ENCODE measurements at regions of chr1 and their contacts with region 1.

Region 1: GRCh38 chr1:29235955-29236684 is at the start of gene PTPRU:
- DNase-seq: no peak
- ATAC-seq: peak; percentile 77
- H3K4me3 ChIP-seq: peak within 1 kb of the TSS; percentile 89 to 97
- H3K27ac ChIP-seq: peak within 1 kb of the TSS; percentile 53; the same call in 1 of the 2 replicates
- H3K4me1 ChIP-seq: peaks cover 17 to 35% of the 10 kb centered on the region in 2 experiments
- H3K27me3 ChIP-seq: no peaks in the 10 kb centered on the region
- CTCF ChIP-seq: peak; percentile 26 to 53 (median 48); a peak in 3 of 6 replicates
- POLR2A ChIP-seq: no peak
- RAD21 ChIP-seq: peak; percentile 77
- total RNA-seq, gene PTPRU: 40.7 TPM

Region 2: GRCh38 chr1:27922272-27922671 is 1313.8 kb before region 1 on chr1:
- CTCF ChIA-PET with region 1: no interaction called
- POLR2A ChIA-PET with region 1: no interaction called
- RAD21 ChIA-PET with region 1: no interaction called
- intact Hi-C with region 1: no loop called
- DNase-seq: no peak
- ATAC-seq: no peak
- H3K4me3 ChIP-seq: no peak overlapping the region
- H3K27ac ChIP-seq: no peak overlapping the region
- H3K4me1 ChIP-seq: no peaks in the 10 kb centered on the region
- H3K27me3 ChIP-seq: no peaks in the 10 kb centered on the region
- CTCF ChIP-seq: no peak
- POLR2A ChIP-seq: no peak
- RAD21 ChIP-seq: no peak

Region 3: DNA sequence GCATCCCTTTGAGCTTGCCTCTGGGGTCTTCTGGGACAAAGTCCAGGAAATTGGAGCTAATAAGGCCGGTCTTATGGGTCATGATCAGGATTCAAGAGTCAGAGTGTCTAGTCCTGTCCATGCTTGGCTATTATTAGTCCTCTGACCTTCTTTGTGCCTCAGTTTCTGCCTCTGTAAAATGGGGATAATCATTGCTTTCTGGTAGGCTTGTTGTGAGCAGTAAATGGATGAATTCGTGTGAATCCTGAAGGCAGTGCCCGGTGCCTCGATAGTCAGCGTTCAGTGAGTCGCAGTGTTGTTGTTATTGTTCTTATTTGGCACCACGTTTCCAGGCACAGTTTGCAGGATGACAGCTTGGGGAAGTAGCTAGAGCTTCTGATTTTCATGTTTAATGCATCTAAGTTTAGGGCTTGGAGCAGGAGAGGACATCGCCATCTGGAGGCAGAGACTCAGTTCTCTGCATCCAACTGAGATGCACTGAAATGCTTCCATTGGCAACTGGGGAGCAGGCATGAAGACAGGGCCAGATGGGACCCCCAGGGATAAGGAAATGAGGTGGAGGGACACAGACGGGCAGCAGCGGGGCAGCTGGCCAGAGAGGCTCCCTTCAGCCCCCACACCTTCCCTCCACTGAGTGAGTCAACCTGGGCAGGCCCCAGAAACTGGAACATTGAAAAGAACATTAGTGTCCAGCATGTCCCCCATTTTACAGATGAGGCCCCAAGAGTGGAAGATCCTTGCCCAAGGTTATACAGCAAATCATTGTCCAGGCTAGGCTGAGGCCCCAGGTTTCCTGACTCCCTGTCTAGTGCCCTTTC is 160.5 kb after region 1 on chr1:
- CTCF ChIA-PET with region 1: interaction called, 3 read pairs
- POLR2A ChIA-PET with region 1: no interaction called
- RAD21 ChIA-PET with region 1: no interaction called
- intact Hi-C with region 1: loop called (anchors 5 kb)
- DNase-seq: no peak
- ATAC-seq: no peak
- H3K4me3 ChIP-seq: no peak overlapping the region
- H3K27ac ChIP-seq: no peak overlapping the region
- H3K4me1 ChIP-seq: peaks cover 0 to 6% of the 10 kb centered on the region in 2 experiments; a peak in 2 of 4 replicates
- H3K27me3 ChIP-seq: no peaks in the 10 kb centered on the region
- CTCF ChIP-seq: peak; percentile 8 to 45 (median 39); a peak in 5 of 6 replicates
- POLR2A ChIP-seq: no peak
- RAD21 ChIP-seq: peak; percentile 33; the same call in 1 of the 2 replicates

Region 4: GRCh38 chr1:29849038-29849750 is 613.1 kb after region 1 on chr1:
- CTCF ChIA-PET with region 1: no interaction called
- POLR2A ChIA-PET with region 1: no interaction called
- RAD21 ChIA-PET with region 1: interaction called in 1 of 2 experiments, 4 read pairs
- intact Hi-C with region 1: loop called (anchors 5 kb)
- DNase-seq: no peak
- ATAC-seq: peak; percentile 96
- H3K4me3 ChIP-seq: no peak overlapping the region
- H3K27ac ChIP-seq: no peak overlapping the region
- H3K4me1 ChIP-seq: peaks cover 0 to 5% of the 10 kb centered on the region in 2 experiments; a peak in 3 of 4 replicates
- H3K27me3 ChIP-seq: peaks cover 8% of the 10 kb centered on the region; the same call in 1 of the 2 replicates
- CTCF ChIP-seq: peak; percentile 65 to 91 (median 72)
- POLR2A ChIP-seq: no peak
- RAD21 ChIP-seq: peak; percentile 82

Region 5: DNA sequence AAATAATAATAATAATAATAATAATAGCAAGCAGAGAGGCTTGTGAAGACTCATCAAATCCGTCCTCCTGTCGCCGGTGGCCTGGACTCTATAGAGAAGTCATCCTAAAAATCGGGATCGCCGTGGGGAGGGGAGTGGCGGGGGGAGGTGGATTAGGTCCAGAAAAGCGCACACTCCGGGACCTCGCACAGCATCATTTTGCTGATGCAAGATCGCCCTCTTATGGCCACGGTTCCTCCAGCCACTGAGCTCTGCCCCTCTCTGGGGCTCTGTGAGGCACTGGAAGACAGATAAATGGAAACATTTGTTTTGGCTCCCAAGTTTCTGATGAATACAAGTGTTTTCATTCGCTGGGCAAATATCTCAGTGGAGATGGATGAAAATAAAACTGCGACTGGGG is 875.3 kb after region 1 on chr1:
- CTCF ChIA-PET with region 1: no interaction called
- POLR2A ChIA-PET with region 1: no interaction called
- RAD21 ChIA-PET with region 1: no interaction called
- intact Hi-C with region 1: loop called (anchors 2 kb)
- DNase-seq: peak; percentile 10
- ATAC-seq: peak; percentile 97
- H3K4me3 ChIP-seq: no peak overlapping the region
- H3K27ac ChIP-seq: no peak overlapping the region
- H3K4me1 ChIP-seq: no peaks in the 10 kb centered on the region
- H3K27me3 ChIP-seq: peaks cover 40% of the 10 kb centered on the region
- CTCF ChIP-seq: peak; percentile 50 to 73 (median 73); a peak in 5 of 6 replicates
- POLR2A ChIP-seq: no peak
- RAD21 ChIP-seq: peak; percentile 78

Region 6: GRCh38 chr1:30353637-30354036 is 1117.5 kb after region 1 on chr1:
- CTCF ChIA-PET with region 1: no interaction called
- POLR2A ChIA-PET with region 1: no interaction called
- RAD21 ChIA-PET with region 1: no interaction called
- intact Hi-C with region 1: loop called (anchors 5 kb)
- DNase-seq: no peak
- ATAC-seq: peak; percentile 82
- H3K4me3 ChIP-seq: no peak overlapping the region
- H3K27ac ChIP-seq: no peak overlapping the region
- H3K4me1 ChIP-seq: no peaks in the 10 kb centered on the region
- H3K27me3 ChIP-seq: peaks cover 17% of the 10 kb centered on the region
- CTCF ChIP-seq: peak; percentile 26 to 47 (median 44); a peak in 5 of 6 replicates
- POLR2A ChIP-seq: no peak
- RAD21 ChIP-seq: peak; percentile 22; the same call in 1 of the 2 replicates

Measured in HCT116 (cell line).